Calu3 (cell line): ENCODE measurements at regions of chr5 and their contacts with region 1.

Region 1: DNA sequence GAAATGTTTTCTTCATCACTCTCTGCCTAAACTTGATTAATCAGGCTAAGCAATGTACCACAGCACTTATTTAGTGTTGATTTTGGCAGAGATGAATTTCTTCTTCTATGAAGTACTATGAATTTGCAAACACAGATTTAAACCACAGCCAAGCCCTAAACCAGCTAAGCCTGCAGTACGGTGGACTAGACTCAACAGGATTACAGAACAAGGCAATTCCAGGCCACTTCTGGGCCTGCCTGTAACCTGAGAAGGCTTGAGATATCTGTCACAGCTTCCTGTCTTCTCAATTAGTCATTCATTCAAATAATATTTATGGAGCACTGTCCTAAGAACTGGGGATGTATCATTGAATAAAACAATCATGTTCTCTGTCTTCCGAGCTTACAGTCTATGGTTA is 32.4 kb upstream of the CAST start:
- DNase-seq: peak; percentile 64
- H3K4me3 Mint-ChIP-seq: peak overlapping the region; percentile 16
- H3K27ac Mint-ChIP-seq: peak overlapping the region; percentile 36
- H3K4me1 Mint-ChIP-seq: peaks cover 81% of the 10 kb centered on the region
- H3K27me3 Mint-ChIP-seq: no peaks in the 10 kb centered on the region
- CTCF ChIP-seq: no peak

Region 2: DNA sequence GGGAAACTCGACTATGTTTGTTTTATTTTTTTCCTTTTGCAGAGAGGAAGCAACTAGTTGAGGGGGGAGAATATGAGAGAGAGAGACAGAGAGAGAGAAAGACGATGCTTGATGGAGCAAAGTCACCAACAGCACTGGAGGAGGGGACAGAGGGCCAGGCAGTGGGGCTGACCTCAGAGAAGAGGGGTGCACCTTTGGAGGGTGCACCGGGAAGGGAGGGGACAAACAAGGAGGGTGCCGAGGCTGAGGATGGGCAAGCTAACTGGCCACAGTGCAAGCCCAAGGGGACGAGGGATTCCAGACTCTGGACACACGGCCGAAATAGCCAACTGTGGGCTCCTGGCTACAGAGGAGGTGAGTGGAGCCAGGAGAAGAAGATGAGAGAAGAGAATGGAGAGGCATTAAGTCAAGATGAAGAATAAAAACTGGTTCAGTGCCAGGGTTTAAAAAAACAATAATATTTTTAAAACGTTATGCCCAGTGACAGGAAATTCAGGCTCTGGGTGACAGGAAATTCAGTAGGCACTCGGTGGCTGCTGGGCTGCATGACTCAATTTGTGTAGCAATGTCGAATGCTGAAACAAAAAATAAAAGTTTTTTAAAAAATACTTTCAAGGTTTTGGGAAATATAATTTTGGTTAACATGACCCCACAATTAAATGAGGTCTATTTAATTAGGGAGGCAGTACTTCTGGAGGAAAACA is 793.9 kb before region 1 on chr5:
- CTCF ChIA-PET with region 1: no interaction called
- intact Hi-C with region 1: no loop called
- DNase-seq: no peak
- H3K4me3 Mint-ChIP-seq: peak overlapping the region; percentile 55
- H3K27ac Mint-ChIP-seq: peak overlapping the region; percentile 57
- H3K4me1 Mint-ChIP-seq: peaks cover 64% of the 10 kb centered on the region
- H3K27me3 Mint-ChIP-seq: no peaks in the 10 kb centered on the region
- CTCF ChIP-seq: no peak

Region 3: DNA sequence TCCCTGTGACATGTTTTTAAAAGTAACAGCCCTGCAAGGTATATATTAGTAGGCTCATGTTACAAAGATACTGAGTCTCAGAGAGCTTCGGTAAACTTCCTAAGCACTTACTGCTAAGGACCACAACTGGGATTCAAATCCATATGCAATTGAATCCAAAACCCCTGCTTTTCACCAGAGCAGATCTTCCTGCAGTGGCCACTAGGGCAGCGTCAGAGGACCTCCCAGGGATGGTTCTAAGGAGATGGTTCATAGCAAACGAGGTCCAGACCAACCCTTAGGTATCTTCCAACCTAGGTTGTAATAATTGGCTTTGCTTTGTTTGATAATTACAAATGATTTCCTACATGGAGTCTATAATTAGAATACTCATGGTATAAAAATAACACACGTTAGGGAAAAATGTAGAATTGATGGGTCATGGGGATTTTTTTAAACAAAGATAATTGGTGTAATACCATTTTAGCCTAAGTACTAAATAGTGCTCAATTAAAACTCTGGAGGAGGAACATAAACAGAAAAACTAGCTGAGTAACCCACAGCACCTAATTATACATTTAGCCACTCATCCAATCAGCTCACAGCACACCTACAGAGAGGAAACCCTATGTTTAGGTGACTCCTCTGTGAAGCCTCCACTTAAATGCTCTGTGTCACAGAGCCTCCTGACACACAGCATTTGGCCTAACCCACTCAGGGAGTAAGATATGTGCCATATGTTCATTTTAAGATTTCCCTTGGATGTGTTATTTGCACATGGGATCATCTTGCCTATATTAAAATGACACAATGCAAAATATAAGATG is 22.4 kb after region 1 on chr5:
- CTCF ChIA-PET with region 1: interaction called, 7 read pairs
- intact Hi-C with region 1: loop called (anchors 1 kb)
- DNase-seq: peak; percentile 55
- H3K4me3 Mint-ChIP-seq: no peak overlapping the region
- H3K27ac Mint-ChIP-seq: no peak overlapping the region
- H3K4me1 Mint-ChIP-seq: peaks cover 94% of the 10 kb centered on the region
- H3K27me3 Mint-ChIP-seq: no peaks in the 10 kb centered on the region
- CTCF ChIP-seq: peak; percentile 50

Region 4: DNA sequence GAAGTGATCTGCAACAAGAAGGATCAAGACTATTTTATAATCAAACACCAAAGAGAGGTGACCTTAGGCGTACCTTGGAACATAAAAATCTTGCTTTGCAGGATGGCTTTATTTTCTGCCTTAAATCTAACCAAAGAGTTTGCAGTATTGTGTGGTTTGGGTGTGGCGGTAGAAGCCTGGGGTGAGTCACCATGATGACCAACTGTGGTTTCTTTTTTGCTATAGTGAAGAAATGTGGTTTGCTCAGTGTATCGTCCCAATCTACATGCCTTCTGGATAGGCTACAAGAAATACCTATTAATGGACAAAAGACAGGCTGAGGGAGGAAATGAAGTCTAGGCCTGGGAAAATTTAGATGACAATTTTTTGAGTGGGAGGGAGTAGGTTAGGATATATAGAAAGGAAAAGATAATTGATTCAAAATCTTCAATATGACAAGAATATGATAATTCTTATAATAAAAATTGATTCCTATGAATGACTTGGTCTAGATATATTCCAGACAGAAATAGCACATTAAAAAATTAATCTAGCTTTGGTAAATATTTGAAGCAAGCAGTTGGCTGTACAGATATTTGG is 27.4 kb after region 1 on chr5:
- CTCF ChIA-PET with region 1: interaction called, 17 read pairs
- intact Hi-C with region 1: loop called (anchors 1 kb)
- DNase-seq: peak; percentile 76
- H3K4me3 Mint-ChIP-seq: peak overlapping the region; percentile 56
- H3K27ac Mint-ChIP-seq: peak overlapping the region; percentile 98
- H3K4me1 Mint-ChIP-seq: peaks cover 92% of the 10 kb centered on the region
- H3K27me3 Mint-ChIP-seq: no peaks in the 10 kb centered on the region
- CTCF ChIP-seq: no peak

Region 5: DNA sequence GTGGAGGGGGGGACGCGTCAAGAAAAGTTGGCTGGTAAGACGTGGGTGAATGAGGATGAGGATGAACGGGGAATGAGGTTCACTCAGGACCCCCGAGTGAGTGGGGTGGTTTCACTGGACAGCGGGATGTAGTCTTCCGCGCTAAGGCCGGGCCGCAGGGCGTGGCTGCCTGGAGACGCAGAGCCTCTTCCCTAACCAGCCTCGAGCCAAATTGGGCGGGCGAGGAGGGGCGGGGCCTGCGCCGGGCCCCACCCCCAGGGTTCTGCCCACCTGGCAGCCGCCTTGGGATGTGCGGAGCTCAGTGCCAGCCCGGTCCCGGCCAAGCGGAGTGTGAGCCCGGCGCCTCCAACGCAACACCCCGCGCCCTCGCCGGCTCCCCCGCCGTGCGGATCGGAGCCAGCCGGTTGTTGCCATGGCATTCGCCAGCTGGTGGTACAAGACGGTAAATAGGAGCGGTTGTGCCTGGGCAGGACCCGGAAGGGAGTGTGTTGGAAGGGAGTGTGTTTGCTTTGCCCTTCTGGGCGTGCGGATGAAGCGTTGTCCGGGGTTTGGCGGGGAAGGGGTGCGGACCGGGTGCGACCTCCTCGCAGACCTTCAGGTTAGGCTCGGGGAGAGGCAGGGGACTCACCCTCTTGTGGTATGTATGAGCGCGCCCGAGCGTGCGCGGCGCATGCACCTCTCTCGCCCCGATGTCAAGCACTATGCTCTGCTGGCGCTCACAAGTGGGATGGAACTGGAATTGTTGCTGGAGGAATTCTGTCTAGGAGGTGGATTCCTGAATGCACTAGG is 33.1 kb after region 1 on chr5:
- CTCF ChIA-PET with region 1: interaction called, 17 read pairs
- intact Hi-C with region 1: loop called (anchors 1 kb)
- DNase-seq: peak; percentile 98
- H3K4me3 Mint-ChIP-seq: peak overlapping the region; percentile 97
- H3K27ac Mint-ChIP-seq: peak overlapping the region; percentile 79
- H3K4me1 Mint-ChIP-seq: peaks cover 62% of the 10 kb centered on the region
- H3K27me3 Mint-ChIP-seq: no peaks in the 10 kb centered on the region
- CTCF ChIP-seq: no peak

Region 6: DNA sequence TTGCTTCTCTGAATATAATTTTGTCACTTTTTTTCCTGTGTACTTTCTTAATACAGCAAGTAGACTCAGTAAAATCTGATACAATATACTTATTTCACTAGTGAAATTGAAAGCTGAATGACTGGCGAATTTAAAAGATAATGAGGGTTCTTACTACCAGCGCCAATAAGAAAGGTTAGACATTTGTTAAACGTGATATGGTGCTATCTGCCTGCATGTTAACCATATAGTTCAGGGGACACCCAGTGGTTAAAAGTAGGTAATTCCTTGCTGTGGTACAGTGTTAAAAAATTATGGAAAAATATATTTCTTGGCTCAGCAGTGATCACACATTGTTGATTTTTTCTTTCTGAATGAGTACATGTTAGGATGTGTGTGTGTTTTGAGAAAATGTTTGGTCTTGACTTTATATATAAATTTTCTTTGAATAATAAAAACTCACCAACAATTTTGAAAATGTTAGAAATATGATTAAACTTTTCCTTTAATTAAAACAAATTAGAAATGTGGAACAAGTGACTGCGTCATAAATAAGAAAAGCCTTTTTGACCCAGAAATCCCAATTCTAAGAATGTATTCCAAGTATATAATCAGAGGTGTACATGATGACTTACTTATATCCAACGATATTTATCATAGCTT is 58.2 kb after region 1 on chr5:
- CTCF ChIA-PET with region 1: no interaction called
- intact Hi-C with region 1: loop called (anchors 5 kb)
- DNase-seq: no peak
- H3K4me3 Mint-ChIP-seq: no peak overlapping the region
- H3K27ac Mint-ChIP-seq: no peak overlapping the region
- H3K4me1 Mint-ChIP-seq: peaks cover 30% of the 10 kb centered on the region
- H3K27me3 Mint-ChIP-seq: no peaks in the 10 kb centered on the region
- CTCF ChIP-seq: peak; percentile 65

Region 7: GRCh38 chr5:96734871-96735325 is 105.1 kb after region 1 on chr5:
- CTCF ChIA-PET with region 1: no interaction called
- intact Hi-C with region 1: loop called (anchors 5 kb)
- DNase-seq: no peak
- H3K4me3 Mint-ChIP-seq: peak overlapping the region; percentile 48
- H3K27ac Mint-ChIP-seq: peak overlapping the region; percentile 83
- H3K4me1 Mint-ChIP-seq: peaks cover 35% of the 10 kb centered on the region
- H3K27me3 Mint-ChIP-seq: no peaks in the 10 kb centered on the region
- CTCF ChIP-seq: no peak